ENCODE measurements at regions of chr1 and their contacts with region 1.

Region 1: DNA sequence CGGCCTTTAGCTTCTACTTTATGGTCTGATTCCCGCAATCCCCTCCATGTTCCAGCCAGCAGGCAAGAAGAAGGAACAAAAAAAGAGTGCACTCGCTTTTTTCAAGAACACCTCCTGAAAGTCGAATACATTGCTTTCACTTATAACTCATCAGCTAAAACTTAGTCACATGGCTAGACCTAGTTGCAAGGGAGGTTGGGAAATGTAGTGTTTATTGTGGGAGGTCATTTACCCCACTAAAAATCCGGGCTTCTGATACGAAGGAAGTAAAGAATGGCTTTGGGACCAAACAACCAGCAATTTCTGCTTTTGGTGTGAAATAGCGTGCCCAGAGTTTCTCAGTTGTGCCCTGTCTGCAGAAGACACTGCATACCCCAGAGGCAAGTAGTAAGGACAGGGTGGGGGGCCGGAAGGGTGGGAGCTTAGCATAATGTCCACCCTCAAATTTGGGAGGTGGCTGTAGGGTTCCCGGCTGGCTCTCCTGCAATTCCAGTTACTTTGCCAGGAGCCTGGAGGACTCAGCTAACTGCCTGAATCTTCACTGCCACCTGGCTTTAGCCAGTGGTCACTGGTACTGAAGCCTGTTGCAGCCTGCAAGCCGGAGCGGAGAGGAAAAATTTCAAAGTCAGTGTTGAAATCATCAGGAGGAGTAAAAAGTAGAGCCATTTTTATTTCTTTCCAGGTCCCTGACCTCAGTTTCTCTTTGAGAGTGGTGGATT is 57.7 kb upstream of the F3 start:
- DNase-seq: peak in 1 of 2 donors; percentile 48
- ATAC-seq: no peak
- H3K4me3 ChIP-seq: no peak overlapping the region
- H3K27ac ChIP-seq: no peak overlapping the region
- H3K4me1 ChIP-seq: no peaks in the 10 kb centered on the region
- H3K27me3 ChIP-seq: no peaks in the 10 kb centered on the region
- CTCF ChIP-seq: no peak
- POLR2A ChIP-seq: no peak

Region 2: DNA sequence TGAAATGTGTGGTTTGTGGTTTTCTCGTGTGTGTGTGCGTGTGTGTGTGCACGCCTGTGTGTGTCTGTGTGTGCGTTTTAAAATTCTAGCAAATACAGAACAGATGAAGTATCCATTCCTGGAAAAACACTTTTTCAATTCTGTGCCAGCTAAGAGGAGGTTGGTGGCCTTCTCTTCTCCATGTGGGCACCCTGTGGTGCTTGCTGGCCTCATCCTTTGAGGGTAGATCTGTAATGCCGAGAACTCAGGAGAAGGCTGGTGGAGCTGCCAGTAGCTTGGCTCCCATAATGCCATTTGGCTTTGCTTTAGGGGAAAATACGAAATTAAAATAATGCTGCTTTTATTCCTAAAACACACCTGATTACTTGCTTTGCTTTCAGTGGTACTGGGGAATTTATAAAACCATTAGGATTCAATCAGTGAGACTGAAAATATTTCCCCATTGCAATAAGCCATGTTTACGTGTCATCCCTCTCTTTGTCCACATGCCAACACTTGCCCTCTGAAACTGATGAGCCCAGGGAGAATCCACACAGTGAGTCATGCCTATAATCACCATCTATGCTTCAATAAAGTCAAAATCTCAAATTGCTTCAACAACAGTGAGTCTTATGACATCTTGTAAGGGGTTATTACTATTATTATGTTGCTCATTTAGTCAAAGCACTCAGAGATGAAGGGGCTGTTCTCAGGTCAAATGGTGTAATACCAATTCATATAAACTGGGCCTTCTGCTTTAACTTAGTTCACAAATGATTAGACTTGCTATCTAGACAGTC is 517.5 kb before region 1 on chr1:
- in situ Hi-C with region 1: no loop called
- intact Hi-C with region 1: no loop called
- DNase-seq: no peak
- ATAC-seq: peak in 1 of 2 donors; percentile 41
- H3K4me3 ChIP-seq: no peak overlapping the region
- H3K27ac ChIP-seq: no peak overlapping the region
- H3K4me1 ChIP-seq: no peaks in the 10 kb centered on the region
- H3K27me3 ChIP-seq: no peaks in the 10 kb centered on the region
- CTCF ChIP-seq: no peak
- POLR2A ChIP-seq: no peak

Region 3: GRCh38 chr1:94522304-94522703 is 77.0 kb before region 1 on chr1:
- in situ Hi-C with region 1: loop called in 2 of 4 experiments (anchors 5 kb)
- intact Hi-C with region 1: no loop called
- DNase-seq: no peak
- ATAC-seq: peak in 1 of 2 donors; percentile 19
- H3K4me3 ChIP-seq: no peak overlapping the region
- H3K27ac ChIP-seq: no peak overlapping the region
- H3K4me1 ChIP-seq: no peaks in the 10 kb centered on the region
- H3K27me3 ChIP-seq: no peaks in the 10 kb centered on the region
- CTCF ChIP-seq: peak in 1 of 5 experiments; percentile 25
- POLR2A ChIP-seq: no peak

Region 4: DNA sequence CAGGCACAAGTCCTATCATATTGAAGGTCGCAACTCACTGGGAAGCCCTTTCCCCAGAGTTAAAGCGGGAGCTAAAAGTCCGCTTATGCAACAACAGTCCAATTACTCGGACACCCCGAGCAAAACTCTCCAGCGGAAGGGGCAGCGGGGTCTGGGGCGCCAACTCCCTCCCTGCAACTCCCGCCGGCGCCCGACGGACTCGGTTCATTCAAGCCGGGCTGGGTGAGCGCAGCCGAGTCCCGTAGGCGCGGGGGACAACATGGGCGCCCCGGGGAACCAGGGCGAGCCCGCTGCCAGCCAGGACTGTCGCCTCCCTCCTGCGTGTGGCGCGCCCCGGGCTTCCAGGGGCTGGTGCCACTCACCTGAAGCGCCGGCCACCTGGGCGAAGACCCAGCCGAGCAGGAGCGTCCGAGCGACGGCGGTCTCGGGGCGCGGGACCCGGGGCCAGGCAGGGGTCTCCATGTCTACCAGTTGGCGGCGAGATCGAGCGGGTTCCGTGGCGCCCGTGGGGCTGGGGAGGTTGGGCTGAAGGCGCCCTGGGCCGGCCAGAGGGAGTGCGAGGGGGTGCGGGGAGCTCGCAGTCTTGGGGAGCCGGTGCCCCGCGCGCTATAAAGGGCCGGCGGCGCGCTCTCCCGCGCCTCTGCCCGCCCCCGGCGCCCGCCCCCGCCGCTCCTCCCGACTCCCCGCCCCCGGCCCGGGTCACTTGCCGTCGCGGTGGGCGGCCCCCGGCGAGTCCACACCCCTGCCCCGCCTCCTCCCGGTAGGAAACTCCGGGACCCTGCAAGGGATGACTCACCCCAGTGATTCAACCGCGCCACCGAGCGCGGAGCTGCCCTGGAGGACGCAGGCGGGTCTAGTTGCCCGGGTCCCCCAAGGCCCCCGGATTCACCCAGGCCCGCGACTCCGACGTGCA is 57.8 kb before region 1 on chr1 and contains the start of gene F3:
- in situ Hi-C with region 1: no loop called
- intact Hi-C with region 1: loop called (anchors 10 kb)
- DNase-seq: peak; percentile 67 to 77
- ATAC-seq: peak; percentile 64 to 70
- H3K4me3 ChIP-seq: peak within 1 kb of the TSS; percentile 54 to 76 (median 62)
- H3K27ac ChIP-seq: peak within 1 kb of the TSS; percentile 76 to 80 (median 79)
- H3K4me1 ChIP-seq: peaks cover 5 to 26% of the 10 kb centered on the region in 2 donors
- H3K27me3 ChIP-seq: peaks cover 28 to 46% (median 36%) of the 10 kb centered on the region in 3 donors
- CTCF ChIP-seq: no peak
- POLR2A ChIP-seq: peak; percentile 53 to 69
- total RNA-seq, gene F3: 3.1 to 10.8 (median 6.3) TPM

Region 5: DNA sequence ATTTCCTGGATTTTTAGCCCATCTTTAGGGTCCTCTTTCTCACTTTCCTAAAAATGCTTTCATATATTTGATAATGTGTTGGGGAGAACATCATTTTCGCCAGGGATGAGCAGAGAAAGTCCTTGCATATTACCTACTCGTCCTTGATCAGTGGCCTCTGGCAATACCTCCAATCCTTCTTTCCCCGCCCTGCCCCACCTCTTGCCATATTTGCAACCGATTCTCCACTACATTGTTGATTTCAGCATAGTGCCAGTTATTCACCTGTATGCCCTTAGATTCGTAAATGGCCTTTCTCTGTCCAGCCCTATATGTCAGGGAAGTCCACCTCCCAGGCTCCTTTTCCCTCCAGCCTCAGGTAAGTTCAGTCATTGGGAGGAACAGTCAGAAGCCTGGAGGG is 44.2 kb before region 1 on chr1:
- in situ Hi-C with region 1: no loop called
- intact Hi-C with region 1: no loop called
- DNase-seq: no peak
- ATAC-seq: no peak
- H3K4me3 ChIP-seq: no peak overlapping the region
- H3K27ac ChIP-seq: no peak overlapping the region
- H3K4me1 ChIP-seq: no peaks in the 10 kb centered on the region
- H3K27me3 ChIP-seq: no peaks in the 10 kb centered on the region
- CTCF ChIP-seq: no peak
- POLR2A ChIP-seq: no peak

Measured in gastrocnemius medialis (tissue), 4 donors.